Calu3 (cell line): ENCODE measurements at regions of chr3 and their contacts with region 1.

Region 1: DNA sequence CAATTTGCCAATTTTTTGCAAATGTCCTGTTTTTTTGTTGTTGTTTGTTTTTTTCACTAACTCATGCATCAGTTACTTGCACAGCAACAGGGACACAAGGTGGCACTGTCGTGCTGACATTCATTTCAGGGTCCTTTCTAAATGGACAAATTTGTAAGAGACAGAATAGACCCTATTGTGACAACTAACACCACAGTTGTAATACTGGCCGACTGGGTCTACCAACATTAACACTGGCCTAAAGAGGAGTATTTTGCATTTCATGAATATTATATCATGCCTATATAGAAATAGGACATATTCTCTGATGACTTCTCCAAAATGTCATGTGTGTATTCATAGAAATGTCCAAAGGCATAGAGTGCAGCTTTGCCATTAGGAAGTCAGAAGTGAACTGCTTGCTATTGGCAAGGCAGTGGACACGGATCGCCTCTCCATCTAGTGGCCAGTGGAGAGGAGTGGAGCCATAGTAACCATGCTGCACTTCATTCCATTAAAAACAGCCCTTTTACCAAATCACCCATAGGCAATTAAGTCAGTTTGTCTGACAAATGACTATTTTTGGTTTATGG is 54.8 kb downstream of the ZBTB20 start:
- DNase-seq: peak; percentile 50
- H3K4me3 Mint-ChIP-seq: no peak overlapping the region
- H3K27ac Mint-ChIP-seq: no peak overlapping the region
- H3K4me1 Mint-ChIP-seq: no peaks in the 10 kb centered on the region
- H3K27me3 Mint-ChIP-seq: no peaks in the 10 kb centered on the region
- CTCF ChIP-seq: peak; percentile 30

Region 2: GRCh38 chr3:114362815-114363214 is 729.5 kb before region 1 on chr3:
- CTCF ChIA-PET with region 1: no interaction called
- intact Hi-C with region 1: loop called (anchors 5 kb)
- DNase-seq: no peak
- H3K4me3 Mint-ChIP-seq: no peak overlapping the region
- H3K27ac Mint-ChIP-seq: no peak overlapping the region
- H3K4me1 Mint-ChIP-seq: peaks cover 9% of the 10 kb centered on the region
- H3K27me3 Mint-ChIP-seq: no peaks in the 10 kb centered on the region
- CTCF ChIP-seq: peak; percentile 26

Region 3: GRCh38 chr3:114566162-114566755 is 526.0 kb before region 1 on chr3:
- CTCF ChIA-PET with region 1: no interaction called
- intact Hi-C with region 1: no loop called
- DNase-seq: no peak
- H3K4me3 Mint-ChIP-seq: no peak overlapping the region
- H3K27ac Mint-ChIP-seq: no peak overlapping the region
- H3K4me1 Mint-ChIP-seq: peaks cover 12% of the 10 kb centered on the region
- H3K27me3 Mint-ChIP-seq: no peaks in the 10 kb centered on the region
- CTCF ChIP-seq: no peak

Region 4: DNA sequence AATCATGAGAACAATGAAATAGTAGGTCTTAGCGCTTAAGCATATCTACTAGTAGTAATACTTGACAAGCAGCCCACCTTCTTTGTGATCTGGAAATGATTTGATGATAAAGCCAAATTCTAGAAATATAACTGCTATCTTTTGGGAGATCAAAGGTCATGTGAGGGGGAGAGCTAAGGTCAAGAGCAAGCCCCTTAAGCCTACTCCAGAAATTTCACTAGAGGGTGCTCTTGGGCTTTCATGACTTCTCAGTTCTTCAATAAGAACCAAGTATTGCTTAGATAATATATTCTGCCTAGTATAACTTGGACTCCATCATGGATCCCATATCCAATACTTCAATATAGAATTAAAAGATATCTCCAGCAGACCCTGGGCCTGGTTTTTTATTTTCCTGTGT is 264.8 kb before region 1 on chr3:
- CTCF ChIA-PET with region 1: no interaction called
- intact Hi-C with region 1: loop called (anchors 2 kb)
- DNase-seq: peak; percentile 17
- H3K4me3 Mint-ChIP-seq: no peak overlapping the region
- H3K27ac Mint-ChIP-seq: no peak overlapping the region
- H3K4me1 Mint-ChIP-seq: no peaks in the 10 kb centered on the region
- H3K27me3 Mint-ChIP-seq: no peaks in the 10 kb centered on the region
- CTCF ChIP-seq: peak; percentile 49

Region 5: GRCh38 chr3:114983248-114983647 is 109.1 kb before region 1 on chr3:
- CTCF ChIA-PET with region 1: no interaction called
- intact Hi-C with region 1: no loop called
- DNase-seq: no peak
- H3K4me3 Mint-ChIP-seq: no peak overlapping the region
- H3K27ac Mint-ChIP-seq: no peak overlapping the region
- H3K4me1 Mint-ChIP-seq: no peaks in the 10 kb centered on the region
- H3K27me3 Mint-ChIP-seq: no peaks in the 10 kb centered on the region
- CTCF ChIP-seq: no peak

Region 6: DNA sequence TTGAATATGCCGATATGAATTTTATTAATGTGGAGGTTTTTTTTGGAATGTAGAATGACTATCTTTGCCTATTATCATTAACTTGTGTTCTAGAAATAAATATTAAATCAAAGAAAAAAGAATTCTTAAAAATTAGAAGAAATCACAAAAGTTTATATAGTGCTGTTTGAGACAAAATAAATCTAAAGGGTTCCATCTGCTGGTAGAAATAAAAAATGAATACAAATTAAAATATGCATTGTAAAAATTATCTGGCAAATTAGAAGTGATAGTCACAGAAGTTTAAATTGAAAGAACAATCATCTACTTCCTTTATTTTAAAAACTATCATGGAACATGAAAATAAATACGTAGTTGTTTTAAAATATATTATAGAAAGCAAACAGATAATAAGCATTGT is 77.5 kb after region 1 on chr3:
- CTCF ChIA-PET with region 1: no interaction called
- intact Hi-C with region 1: loop called (anchors 1 kb)
- DNase-seq: no peak
- H3K4me3 Mint-ChIP-seq: no peak overlapping the region
- H3K27ac Mint-ChIP-seq: no peak overlapping the region
- H3K4me1 Mint-ChIP-seq: no peaks in the 10 kb centered on the region
- H3K27me3 Mint-ChIP-seq: no peaks in the 10 kb centered on the region
- CTCF ChIP-seq: no peak

Region 7: DNA sequence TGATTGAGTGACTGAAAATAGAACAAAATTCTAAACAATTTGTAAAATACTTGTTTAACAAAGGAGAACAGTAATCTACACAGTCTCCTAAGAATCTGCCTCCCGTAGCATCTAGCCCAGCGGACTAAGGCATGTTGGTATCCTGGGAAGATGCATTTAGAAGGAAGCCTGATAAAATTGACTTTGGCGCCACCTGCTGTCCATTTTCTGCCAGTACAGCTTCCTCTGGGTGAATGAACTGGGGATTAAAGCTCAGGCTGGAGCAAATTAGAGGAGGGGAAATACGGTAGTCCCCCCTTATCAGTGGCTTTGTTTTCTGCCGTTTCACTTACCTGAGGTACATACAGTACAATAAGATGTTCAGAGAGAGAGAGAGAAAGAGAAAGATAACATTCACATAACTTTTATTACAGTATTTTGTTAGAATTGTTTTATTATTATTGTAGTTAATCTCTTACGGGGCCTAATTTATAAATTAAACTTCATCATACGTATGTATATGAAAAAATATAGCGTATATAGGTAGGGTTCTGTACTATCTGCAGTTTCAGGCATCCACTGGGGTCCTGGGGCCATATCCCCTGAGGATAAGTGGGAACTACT is 722.6 kb after region 1 on chr3:
- CTCF ChIA-PET with region 1: no interaction called
- intact Hi-C with region 1: loop called (anchors 2 kb)
- DNase-seq: peak; percentile 76
- H3K4me3 Mint-ChIP-seq: no peak overlapping the region
- H3K27ac Mint-ChIP-seq: no peak overlapping the region
- H3K4me1 Mint-ChIP-seq: no peaks in the 10 kb centered on the region
- H3K27me3 Mint-ChIP-seq: no peaks in the 10 kb centered on the region
- CTCF ChIP-seq: peak; percentile 78